ENCODE measurements at regions of chr6 and their contacts with region 1.

Region 1: GRCh38 chr6:107657755-107658461 is 166.2 kb downstream of the SCML4 start:
- DNase-seq: peak in 7 of 10 donors; percentile 24 to 83 (median 47)
- ATAC-seq: peak; percentile 85 to 91
- H3K4me3 Mint-ChIP-seq: peak overlapping the region; percentile 70 to 87 (median 82)
- H3K27ac Mint-ChIP-seq: peak overlapping the region; percentile 80 to 95 (median 90)
- H3K4me1 Mint-ChIP-seq: peaks cover 10 to 56% (median 38%) of the 10 kb centered on the region in 4 donors
- H3K27me3 Mint-ChIP-seq: no peaks in the 10 kb centered on the region

Region 2: DNA sequence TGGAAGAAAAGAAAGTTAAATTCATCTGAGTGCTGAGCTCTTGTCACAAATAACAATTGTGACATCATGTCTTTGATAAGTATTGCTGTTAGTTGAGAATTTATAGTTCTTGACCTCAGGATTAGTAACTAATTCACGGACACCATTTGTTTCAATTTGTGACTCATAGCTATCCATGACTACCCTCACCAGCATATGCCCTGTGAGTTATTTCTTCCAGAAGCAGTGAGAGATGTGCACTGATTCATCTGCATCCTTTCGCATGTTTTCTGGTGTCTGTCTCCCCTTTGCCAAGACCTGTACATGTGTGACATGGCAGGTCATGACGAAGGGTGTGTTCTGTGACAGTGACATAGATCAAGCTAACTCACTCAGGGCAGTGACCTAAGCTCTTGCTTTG is 81.1 kb before region 1 on chr6:
- POLR2A ChIA-PET with region 1: no interaction called
- DNase-seq: no peak
- ATAC-seq: no peak
- H3K4me3 Mint-ChIP-seq: no peak overlapping the region
- H3K27ac Mint-ChIP-seq: no peak overlapping the region
- H3K4me1 Mint-ChIP-seq: no peaks in the 10 kb centered on the region
- H3K27me3 Mint-ChIP-seq: peaks cover 0 to 18% (median 7%) of the 10 kb centered on the region in 5 donors

Region 3: DNA sequence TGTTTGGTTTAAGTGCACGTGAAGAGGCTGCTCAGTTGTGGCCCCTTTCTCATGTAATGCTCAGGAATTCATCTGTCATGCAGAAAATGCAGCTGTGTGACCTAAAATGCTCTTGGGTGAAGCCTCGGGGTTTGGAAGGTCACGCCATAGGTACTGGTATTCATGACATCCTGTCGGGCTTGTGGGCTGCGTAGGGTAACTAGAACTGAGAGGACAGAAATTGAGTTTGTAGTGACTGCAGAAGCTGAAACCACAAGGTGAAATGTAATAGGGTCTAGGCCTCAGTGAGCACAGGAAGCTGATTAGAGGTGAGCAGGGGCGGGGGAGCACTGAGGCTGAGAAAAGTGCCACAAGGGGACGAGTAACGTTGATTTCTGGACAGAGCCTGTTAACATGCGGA is 39.2 kb before region 1 on chr6:
- POLR2A ChIA-PET with region 1: interaction called, 14 read pairs
- DNase-seq: peak in 9 of 10 donors; percentile 2 to 79 (median 61)
- ATAC-seq: peak; percentile 96 to 97
- H3K4me3 Mint-ChIP-seq: peak overlapping the region; percentile 5 to 75 (median 62)
- H3K27ac Mint-ChIP-seq: peak overlapping the region; percentile 70 to 96 (median 87)
- H3K4me1 Mint-ChIP-seq: peaks cover 33 to 42% (median 39%) of the 10 kb centered on the region in 4 donors
- H3K27me3 Mint-ChIP-seq: no peaks in the 10 kb centered on the region

Region 4: GRCh38 chr6:107704347-107705013 is 46.6 kb after region 1 on chr6:
- POLR2A ChIA-PET with region 1: no interaction called
- DNase-seq: peak in 7 of 10 donors; percentile 19 to 50 (median 32)
- ATAC-seq: peak; percentile 36 to 47
- H3K4me3 Mint-ChIP-seq: no peak overlapping the region
- H3K27ac Mint-ChIP-seq: peak overlapping the region; percentile 15 to 79 (median 62)
- H3K4me1 Mint-ChIP-seq: peaks cover 23 to 44% (median 36%) of the 10 kb centered on the region in 4 donors
- H3K27me3 Mint-ChIP-seq: no peaks in the 10 kb centered on the region